Colonic mucosa (tissue), 4 donors: ENCODE measurements at regions of chr5 and their contacts with region 1.

Region 1: GRCh38 chr5:849651-850301 is 1.0 kb downstream of the ZDHHC11 start:
- DNase-seq: no peak
- H3K4me3 ChIP-seq: no peak overlapping the region
- H3K27ac ChIP-seq: no peak overlapping the region
- H3K4me1 ChIP-seq: no peaks in the 10 kb centered on the region
- H3K27me3 ChIP-seq: peaks cover 12% of the 10 kb centered on the region
- CTCF ChIP-seq: no peak

Region 2: DNA sequence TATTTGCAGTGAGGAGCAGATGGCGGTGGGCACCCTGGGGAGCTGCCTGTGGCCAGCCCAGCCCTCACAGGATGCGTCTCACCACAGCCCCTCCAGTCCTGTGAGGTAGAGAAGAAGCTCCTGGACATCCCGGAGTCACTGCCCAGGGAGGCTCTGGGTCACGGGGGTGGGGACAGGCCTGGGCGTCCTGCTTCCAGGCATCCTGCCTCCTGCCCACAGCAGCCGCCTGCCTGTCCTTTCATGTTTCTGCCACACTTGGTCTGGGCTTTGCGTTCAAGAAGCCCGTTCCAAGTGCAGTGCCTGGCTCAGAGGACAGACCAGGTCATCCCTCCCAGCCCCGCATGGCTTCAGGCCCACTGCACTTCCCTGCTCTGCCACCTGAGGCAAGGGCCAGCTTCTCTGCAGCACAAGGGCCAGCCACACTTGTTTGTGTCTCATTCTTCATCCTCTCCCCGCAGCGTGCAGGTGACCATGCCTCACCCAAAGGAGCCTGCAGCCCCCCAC is 103.5 kb before region 1 on chr5:
- intact Hi-C with region 1: loop called (anchors 5 kb)
- DNase-seq: no peak
- H3K4me3 ChIP-seq: no peak overlapping the region
- H3K27ac ChIP-seq: no peak overlapping the region
- H3K4me1 ChIP-seq: no peaks in the 10 kb centered on the region
- H3K27me3 ChIP-seq: no peaks in the 10 kb centered on the region
- CTCF ChIP-seq: no peak

Region 3: GRCh38 chr5:757931-758697 is 91.7 kb before region 1 on chr5:
- intact Hi-C with region 1: loop called (anchors 2 kb)
- DNase-seq: peak; percentile 44
- H3K4me3 ChIP-seq: no peak overlapping the region
- H3K27ac ChIP-seq: no peak overlapping the region
- H3K4me1 ChIP-seq: peaks cover 21% of the 10 kb centered on the region
- H3K27me3 ChIP-seq: no peaks in the 10 kb centered on the region
- CTCF ChIP-seq: no peak

Region 4: DNA sequence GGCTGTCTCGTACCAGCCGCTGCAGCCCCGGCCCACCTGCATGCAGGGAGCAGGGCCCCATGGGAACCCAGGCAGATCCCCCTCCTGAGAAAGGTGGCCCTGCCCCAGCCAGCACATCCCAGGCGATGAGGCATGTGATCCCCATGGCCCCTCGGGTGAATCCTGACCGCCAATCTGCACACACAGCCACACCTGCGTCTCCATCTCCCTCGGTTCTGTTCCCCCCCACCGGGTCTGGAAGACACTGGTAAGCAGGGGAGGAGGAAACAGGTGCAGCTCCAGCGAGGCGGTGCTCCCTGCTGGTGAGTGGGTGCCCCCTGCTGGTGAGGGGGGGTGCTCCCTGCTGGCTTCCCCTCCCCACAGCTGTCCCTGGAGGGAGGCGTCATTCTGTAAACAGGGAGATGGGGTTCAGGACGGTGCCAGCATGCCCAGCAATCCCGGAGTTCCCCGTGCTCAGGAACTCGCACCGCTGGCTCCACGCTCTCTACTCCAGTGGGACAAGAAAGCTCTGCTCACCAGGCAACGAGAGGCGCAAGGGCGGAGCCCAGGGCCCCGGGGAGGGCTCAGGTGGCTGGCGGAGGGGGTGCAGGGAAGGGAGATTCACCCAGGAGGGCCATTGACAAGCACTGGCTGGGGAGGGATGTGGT is 290.5 kb after region 1 on chr5:
- intact Hi-C with region 1: no loop called
- DNase-seq: peak; percentile 91
- H3K4me3 ChIP-seq: no peak overlapping the region
- H3K27ac ChIP-seq: no peak overlapping the region
- H3K4me1 ChIP-seq: peaks cover 11% of the 10 kb centered on the region
- H3K27me3 ChIP-seq: no peaks in the 10 kb centered on the region
- CTCF ChIP-seq: peak; percentile 82